ENCODE measurements at regions of chr19 and their contacts with region 1.

Region 1: DNA sequence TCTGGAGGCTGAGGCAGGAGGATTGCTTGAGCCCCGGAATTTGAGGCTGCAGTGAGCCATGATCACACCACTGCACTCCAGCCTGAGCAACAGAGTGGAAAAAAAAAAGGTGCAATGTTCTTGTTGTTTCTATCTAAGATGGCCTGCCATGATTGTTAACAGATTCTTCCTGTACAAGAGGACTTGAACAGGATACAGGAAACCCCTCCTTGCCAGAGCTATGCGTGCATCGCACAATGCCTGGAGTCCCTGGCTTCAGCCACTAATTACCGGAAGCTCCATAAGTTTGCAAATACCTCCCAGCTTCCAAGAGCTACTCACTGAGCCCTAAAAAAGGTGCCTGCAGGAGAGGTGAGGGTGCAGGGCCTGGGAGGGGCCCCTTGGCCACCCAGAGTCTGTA is 13.1 kb upstream of the HIF3A start:
- DNase-seq: no peak
- ATAC-seq: no peak
- H3K4me3 Mint-ChIP-seq: no peak overlapping the region
- H3K27ac Mint-ChIP-seq: no peak overlapping the region
- H3K4me1 Mint-ChIP-seq: no peaks in the 10 kb centered on the region
- H3K27me3 Mint-ChIP-seq: peaks cover 6% of the 10 kb centered on the region
- CTCF ChIP-seq: no peak

Region 2: DNA sequence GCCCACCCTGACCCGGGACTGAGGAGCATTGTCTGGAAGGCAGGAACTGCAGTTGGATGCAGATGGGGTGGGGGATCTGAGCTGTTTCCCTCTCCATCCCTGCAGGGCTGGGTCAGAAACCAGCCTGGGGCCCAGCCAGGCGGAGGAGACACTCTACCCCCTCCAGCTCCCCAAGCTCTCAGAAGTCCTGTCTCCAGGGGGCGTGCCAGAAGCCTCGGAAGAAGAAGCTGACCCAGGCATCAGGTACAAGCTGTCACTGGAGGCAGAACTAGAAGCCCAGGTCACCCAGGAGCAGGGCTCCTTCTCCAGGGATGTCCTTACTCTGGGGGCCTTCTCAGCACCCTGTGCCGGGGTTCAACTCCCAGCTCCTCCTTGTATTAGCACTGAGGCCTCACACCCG is 530.2 kb before region 1 on chr19:
- CTCF ChIA-PET with region 1: no interaction called
- POLR2A ChIA-PET with region 1: no interaction called
- intact Hi-C with region 1: no loop called
- DNase-seq: no peak
- ATAC-seq: no peak
- H3K4me3 Mint-ChIP-seq: no peak overlapping the region
- H3K27ac Mint-ChIP-seq: no peak overlapping the region
- H3K4me1 Mint-ChIP-seq: no peaks in the 10 kb centered on the region
- H3K27me3 Mint-ChIP-seq: peaks cover 2% of the 10 kb centered on the region
- CTCF ChIP-seq: no peak

Region 3: DNA sequence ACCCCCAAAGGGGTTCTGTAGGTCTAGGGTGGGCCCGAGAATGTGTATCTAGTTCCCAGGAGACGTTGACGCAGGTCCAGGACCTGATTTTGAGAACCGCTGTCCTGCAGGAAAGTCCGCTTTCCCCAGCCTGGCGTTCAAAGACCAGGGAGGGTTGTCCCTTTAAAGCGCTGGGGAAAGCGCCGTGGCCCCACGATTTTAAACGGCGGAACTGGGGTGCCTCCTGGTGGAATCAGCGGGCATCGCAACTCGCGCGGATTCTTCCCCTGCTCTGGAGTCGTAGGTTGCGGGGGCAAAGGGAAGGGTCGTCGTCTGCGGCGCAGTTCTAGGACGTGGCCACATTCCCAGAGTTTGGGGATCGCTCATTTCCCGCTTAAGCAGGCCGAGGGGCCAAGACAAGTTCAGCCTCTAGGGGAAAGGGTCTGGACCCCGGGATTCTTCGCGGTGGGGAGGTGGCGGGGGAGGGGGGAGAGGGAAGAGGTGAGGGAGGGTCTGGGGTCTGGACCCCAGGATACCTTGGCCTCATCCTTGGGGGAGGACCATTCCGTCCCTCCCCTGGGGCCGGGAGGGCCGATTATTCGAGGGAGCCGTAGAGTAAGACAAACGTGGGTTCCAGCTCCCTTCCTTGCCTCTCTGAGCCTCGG is 204.2 kb after region 1 on chr19:
- CTCF ChIA-PET with region 1: interaction called, 13 read pairs
- POLR2A ChIA-PET with region 1: no interaction called
- intact Hi-C with region 1: no loop called
- DNase-seq: peak; percentile 69
- ATAC-seq: peak; percentile 69
- H3K4me3 Mint-ChIP-seq: no peak overlapping the region
- H3K27ac Mint-ChIP-seq: no peak overlapping the region
- H3K4me1 Mint-ChIP-seq: peaks cover 24% of the 10 kb centered on the region
- H3K27me3 Mint-ChIP-seq: peaks cover 73% of the 10 kb centered on the region
- CTCF ChIP-seq: peak; percentile 32

Region 4: GRCh38 chr19:46513461-46514236 is 229.9 kb after region 1 on chr19:
- CTCF ChIA-PET with region 1: interaction called, 6 read pairs
- POLR2A ChIA-PET with region 1: no interaction called
- intact Hi-C with region 1: loop called (anchors 1 kb)
- DNase-seq: peak; percentile 74
- ATAC-seq: peak; percentile 57
- H3K4me3 Mint-ChIP-seq: no peak overlapping the region
- H3K27ac Mint-ChIP-seq: no peak overlapping the region
- H3K4me1 Mint-ChIP-seq: no peaks in the 10 kb centered on the region
- H3K27me3 Mint-ChIP-seq: peaks cover 24% of the 10 kb centered on the region
- CTCF ChIP-seq: no peak

Measured in activated B cell treated with CpG ODN at 0.5 μM for 24 hours (primary cell).